Heart left ventricle (tissue), 16 donors: ENCODE measurements at regions of chr5 and their contacts with region 1.

Region 1: DNA sequence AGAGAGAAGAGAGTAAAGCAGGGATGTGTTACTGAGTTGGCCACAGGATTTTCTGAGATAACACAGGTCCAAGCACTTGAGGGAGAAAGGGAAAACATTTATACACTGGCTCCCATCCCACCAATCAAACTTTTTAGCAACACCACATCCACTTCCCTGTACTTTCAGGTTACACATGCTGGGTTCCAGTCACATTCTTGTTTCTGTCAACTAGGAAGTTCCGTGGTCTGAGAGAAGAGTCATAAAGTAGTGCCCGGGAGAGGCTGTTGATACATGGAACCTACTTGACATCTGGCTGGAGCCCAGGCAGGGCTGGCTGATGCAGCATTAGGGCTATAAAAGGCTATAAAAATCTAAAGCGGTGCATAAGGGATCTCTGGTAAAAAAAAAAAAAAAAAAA is 473.9 kb upstream of the COX7C start:
- DNase-seq: peak in 3 of 5 donors; percentile 24 to 35 (median 27)
- ATAC-seq: peak in 3 of 4 donors; percentile 36 to 87 (median 85)
- H3K4me3 ChIP-seq: no peak overlapping the region
- H3K27ac ChIP-seq: no peak overlapping the region
- H3K4me1 ChIP-seq: no peaks in the 10 kb centered on the region
- H3K27me3 ChIP-seq: no peaks in the 10 kb centered on the region
- CTCF ChIP-seq: no peak
- POLR2A ChIP-seq: no peak

Region 2: GRCh38 chr5:85533341-85534047 is 610.3 kb before region 1 on chr5:
- intact Hi-C with region 1: no loop called
- DNase-seq: no peak
- ATAC-seq: no peak
- H3K4me3 ChIP-seq: no peak overlapping the region
- H3K27ac ChIP-seq: no peak overlapping the region
- H3K4me1 ChIP-seq: no peaks in the 10 kb centered on the region
- H3K27me3 ChIP-seq: no peaks in the 10 kb centered on the region
- CTCF ChIP-seq: no peak
- POLR2A ChIP-seq: no peak

Region 3: GRCh38 chr5:86129009-86129408 is 14.8 kb before region 1 on chr5:
- intact Hi-C with region 1: loop called in 1 of 10 experiments (anchors 1 kb)
- DNase-seq: no peak
- ATAC-seq: no peak
- H3K4me3 ChIP-seq: no peak overlapping the region
- H3K27ac ChIP-seq: no peak overlapping the region
- H3K4me1 ChIP-seq: no peaks in the 10 kb centered on the region
- H3K27me3 ChIP-seq: no peaks in the 10 kb centered on the region
- CTCF ChIP-seq: no peak
- POLR2A ChIP-seq: no peak